Dorsolateral prefrontal cortex (tissue), 120 donors: ENCODE measurements at regions of chr1 and their contacts with region 1.

Region 1: GRCh38 chr1:230368363-230368762 is 57.8 kb downstream of the PGBD5 start:
- DNase-seq: no peak
- H3K4me3 ChIP-seq: no peak overlapping the region
- H3K27ac ChIP-seq: peak overlapping the region in 50 of 59 donors; percentile 1 to 85 (median 58)
- H3K27me3 ChIP-seq: no peaks in the 10 kb centered on the region
- CTCF ChIP-seq: no peak

Region 2: GRCh38 chr1:230321741-230322432 is 46.5 kb before region 1 on chr1:
- intact Hi-C with region 1: loop called in 1 of 2 experiments (anchors 2 kb)
- DNase-seq: peak in 1 of 10 donors; percentile 68
- H3K4me3 ChIP-seq: no peak overlapping the region
- H3K27ac ChIP-seq: peak overlapping the region in 44 of 59 donors; percentile 1 to 77 (median 45)
- H3K27me3 ChIP-seq: no peaks in the 10 kb centered on the region
- CTCF ChIP-seq: no peak

Region 3: DNA sequence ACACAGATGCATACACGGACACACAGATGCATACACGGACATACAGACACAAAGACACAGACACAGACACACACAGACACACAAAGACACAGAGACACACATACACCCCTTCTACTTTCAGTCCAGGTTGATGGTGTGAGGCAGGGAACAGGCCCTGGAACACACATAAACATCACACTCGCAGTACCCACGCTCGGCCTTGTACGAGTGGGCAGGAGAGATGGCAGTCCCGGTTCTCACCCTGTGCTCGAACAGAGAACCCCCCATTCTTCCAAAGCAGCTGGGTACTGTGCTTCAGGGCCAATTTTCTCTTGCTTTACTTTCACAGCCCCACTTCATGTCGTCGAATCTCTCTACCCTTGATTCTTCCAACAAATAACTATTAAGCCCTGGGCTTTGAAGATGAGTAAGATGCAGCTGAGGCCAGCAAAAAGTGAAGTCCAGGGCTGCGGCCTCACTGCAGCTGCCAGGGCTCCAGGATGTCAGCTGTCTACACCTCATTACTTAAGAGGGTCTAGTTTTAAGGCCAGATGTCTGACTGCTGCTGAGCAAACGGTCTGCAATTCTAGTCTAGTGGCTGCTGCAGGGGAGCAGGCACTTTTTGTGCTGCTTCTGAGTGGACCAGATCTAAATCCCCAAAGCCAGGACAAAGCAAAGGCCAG is 32.4 kb before region 1 on chr1:
- intact Hi-C with region 1: no loop called
- DNase-seq: peak in 1 of 10 donors; percentile 12
- H3K4me3 ChIP-seq: no peak overlapping the region
- H3K27ac ChIP-seq: peak overlapping the region in 50 of 59 donors; percentile 0 to 80 (median 46)
- H3K27me3 ChIP-seq: no peaks in the 10 kb centered on the region
- CTCF ChIP-seq: no peak